ENCODE measurements at regions of chr9 and their contacts with region 1.

Region 1: GRCh38 chr9:20997503-20998076 is 33.9 kb downstream of the HACD4 start:
- DNase-seq: no peak
- H3K4me3 Mint-ChIP-seq: no peak overlapping the region
- H3K27ac Mint-ChIP-seq: no peak overlapping the region
- H3K4me1 Mint-ChIP-seq: peaks cover 39% of the 10 kb centered on the region
- H3K27me3 Mint-ChIP-seq: no peaks in the 10 kb centered on the region

Region 2: DNA sequence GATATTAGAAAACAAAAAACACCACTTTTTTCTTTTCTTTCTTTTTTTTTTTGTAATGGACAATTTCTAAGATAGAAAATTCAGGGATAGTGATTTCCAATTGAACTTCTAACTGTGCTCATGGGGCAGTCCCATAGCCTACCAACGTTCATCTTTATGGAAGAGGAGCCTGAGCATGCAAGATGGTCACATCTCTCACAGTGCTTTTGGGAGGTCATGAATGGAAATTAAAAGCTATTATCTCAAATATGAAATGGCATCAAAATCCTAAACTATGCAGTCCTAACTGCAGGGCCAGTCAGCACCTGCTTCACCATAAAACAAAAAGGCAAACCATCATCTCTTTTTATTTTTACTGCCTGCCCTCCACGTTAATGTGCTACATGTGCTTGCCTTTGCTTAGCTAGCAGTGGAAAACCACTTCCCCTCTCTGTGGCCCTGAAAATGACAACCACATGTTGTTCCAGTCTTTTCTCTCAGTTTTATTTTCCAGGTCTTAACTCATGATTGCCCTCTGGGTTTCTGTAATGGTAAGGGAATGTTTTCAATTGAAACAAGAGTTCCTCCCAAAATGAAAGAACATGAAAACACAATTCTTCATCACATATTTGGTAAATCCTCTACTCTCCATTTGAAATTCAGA is 63.5 kb after region 1 on chr9:
- intact Hi-C with region 1: loop called (anchors 5 kb)
- DNase-seq: peak; percentile 16
- H3K4me3 Mint-ChIP-seq: no peak overlapping the region
- H3K27ac Mint-ChIP-seq: peak overlapping the region; percentile 5
- H3K4me1 Mint-ChIP-seq: peaks cover 22% of the 10 kb centered on the region
- H3K27me3 Mint-ChIP-seq: peaks cover 2% of the 10 kb centered on the region